Right ventricle myocardium inferior (tissue), 1 donor: ENCODE measurements at regions of chr5 and their contacts with region 1.

Region 1: GRCh38 chr5:173887610-173888472 is at the start of gene CPEB4:
- DNase-seq: peak; percentile 99
- ATAC-seq: peak; percentile 97
- total RNA-seq, gene CPEB4: 116 TPM

Region 2: GRCh38 chr5:173615884-173616576 is 271.8 kb before region 1 on chr5:
- intact Hi-C with region 1: loop called (anchors 5 kb)
- DNase-seq: no peak
- ATAC-seq: peak; percentile 60

Region 3: DNA sequence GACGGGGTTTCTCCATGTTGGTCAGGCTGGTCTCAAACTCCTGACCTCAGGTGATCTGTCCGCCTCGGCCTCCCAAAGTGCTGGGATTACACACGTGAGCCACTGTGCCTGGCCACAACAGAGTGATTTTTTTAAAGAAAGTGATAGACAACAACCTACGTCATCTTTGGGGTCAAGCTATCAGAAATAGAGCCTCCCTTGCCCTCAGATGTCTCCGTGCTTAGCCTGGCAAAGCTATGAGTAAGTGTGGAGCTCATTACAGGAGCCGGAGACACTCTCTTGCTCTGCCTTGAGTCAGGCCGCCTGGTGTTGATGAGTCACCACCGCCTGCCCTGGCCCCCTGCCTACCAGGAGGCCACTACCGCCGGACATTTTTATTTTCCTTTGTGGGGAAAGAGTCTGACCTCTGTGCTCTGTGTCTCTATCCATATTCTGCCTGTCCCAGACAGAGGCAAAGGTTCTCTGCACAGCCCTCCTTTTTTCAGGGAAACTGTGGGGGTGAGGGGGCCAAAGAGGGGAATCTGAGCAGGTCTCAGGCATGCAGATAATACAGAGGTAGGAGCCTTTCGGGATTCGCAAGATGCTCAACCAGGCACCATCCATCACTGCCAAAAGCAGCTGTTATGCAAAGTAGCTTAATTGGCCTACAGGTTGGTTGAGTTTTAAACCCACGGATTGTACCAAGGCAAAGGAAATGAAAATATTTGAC is 123.4 kb before region 1 on chr5:
- intact Hi-C with region 1: loop called (anchors 1 kb)
- DNase-seq: peak; percentile 76
- ATAC-seq: peak; percentile 27

Region 4: GRCh38 chr5:173920024-173920753 is 32.3 kb after region 1 on chr5:
- intact Hi-C with region 1: loop called (anchors 5 kb)
- DNase-seq: no peak
- ATAC-seq: no peak

Region 5: GRCh38 chr5:173972925-173973615 is 85.2 kb after region 1 on chr5:
- intact Hi-C with region 1: loop called (anchors 2 kb)
- DNase-seq: no peak
- ATAC-seq: peak; percentile 86